ENCODE measurements at regions of chr7 and their contacts with region 1.

Region 1: GRCh38 chr7:77455324-77455723 is 39.2 kb upstream of the GSAP start:
- DNase-seq: peak; percentile 60
- H3K4me3 ChIP-seq: no peak overlapping the region
- H3K27ac ChIP-seq: no peak overlapping the region
- H3K4me1 ChIP-seq: peaks cover 28% of the 10 kb centered on the region
- H3K27me3 ChIP-seq: no peaks in the 10 kb centered on the region
- CTCF ChIP-seq: no peak
- POLR2A ChIP-seq: no peak

Region 2: GRCh38 chr7:77489672-77490071 is 34.3 kb after region 1 on chr7:
- CTCF ChIA-PET with region 1: interaction called, 3 read pairs
- POLR2A ChIA-PET with region 1: no interaction called
- dilution Hi-C with region 1: no loop called
- intact Hi-C with region 1: loop called (anchors 1 kb)
- DNase-seq: no peak
- H3K4me3 ChIP-seq: no peak overlapping the region
- H3K27ac ChIP-seq: no peak overlapping the region
- H3K4me1 ChIP-seq: no peaks in the 10 kb centered on the region
- H3K27me3 ChIP-seq: peaks cover 0 to 8% of the 10 kb centered on the region in 2 experiments
- CTCF ChIP-seq: no peak
- POLR2A ChIP-seq: no peak

Measured in endothelial cell of umbilical vein (primary cell).